ENCODE measurements at regions of chr1 and their contacts with region 1.

Region 1: DNA sequence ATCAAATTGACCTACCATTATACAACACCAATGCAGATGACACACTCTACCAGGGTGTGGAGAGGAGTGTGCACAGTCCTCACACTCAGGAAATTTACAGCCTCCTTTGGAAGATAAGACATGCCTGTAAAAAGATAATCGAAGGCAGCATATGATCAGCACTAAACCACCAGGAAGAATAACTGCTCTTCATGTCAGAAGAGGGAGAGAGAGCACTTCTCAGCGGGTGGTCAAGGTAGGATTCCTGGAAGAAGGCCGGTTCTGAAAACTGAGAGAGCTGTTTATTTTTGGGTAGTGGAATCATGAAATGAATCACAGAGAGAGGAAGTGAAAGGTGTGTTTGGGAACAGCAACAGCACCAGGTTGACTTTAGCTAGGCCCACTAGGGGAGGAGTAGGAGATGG is 14.0 kb upstream of the ZNF697 start:
- DNase-seq: no peak
- ATAC-seq: no peak
- H3K4me3 ChIP-seq: no peak overlapping the region
- H3K27ac ChIP-seq: no peak overlapping the region
- H3K4me1 ChIP-seq: peaks cover 2% of the 10 kb centered on the region; the same call in 1 of the 2 replicates
- H3K27me3 ChIP-seq: peaks cover 11% of the 10 kb centered on the region
- CTCF ChIP-seq: no peak
- POLR2A ChIP-seq: no peak
- RAD21 ChIP-seq: no peak

Region 2: GRCh38 chr1:119549719-119550132 is 112.3 kb before region 1 on chr1:
- CTCF ChIA-PET with region 1: no interaction called
- POLR2A ChIA-PET with region 1: no interaction called
- dilution Hi-C with region 1: no loop called
- in situ Hi-C with region 1: no loop called
- intact Hi-C with region 1: loop called (anchors 1 kb)
- DNase-seq: peak; percentile 67
- ATAC-seq: peak; percentile 85
- H3K4me3 ChIP-seq: no peak overlapping the region
- H3K27ac ChIP-seq: no peak overlapping the region
- H3K4me1 ChIP-seq: no peaks in the 10 kb centered on the region; the same call in 1 of the 2 replicates
- H3K27me3 ChIP-seq: peaks cover 4% of the 10 kb centered on the region; the same call in 1 of the 2 replicates
- CTCF ChIP-seq: peak; percentile 66
- POLR2A ChIP-seq: no peak
- RAD21 ChIP-seq: peak; percentile 66

Region 3: DNA sequence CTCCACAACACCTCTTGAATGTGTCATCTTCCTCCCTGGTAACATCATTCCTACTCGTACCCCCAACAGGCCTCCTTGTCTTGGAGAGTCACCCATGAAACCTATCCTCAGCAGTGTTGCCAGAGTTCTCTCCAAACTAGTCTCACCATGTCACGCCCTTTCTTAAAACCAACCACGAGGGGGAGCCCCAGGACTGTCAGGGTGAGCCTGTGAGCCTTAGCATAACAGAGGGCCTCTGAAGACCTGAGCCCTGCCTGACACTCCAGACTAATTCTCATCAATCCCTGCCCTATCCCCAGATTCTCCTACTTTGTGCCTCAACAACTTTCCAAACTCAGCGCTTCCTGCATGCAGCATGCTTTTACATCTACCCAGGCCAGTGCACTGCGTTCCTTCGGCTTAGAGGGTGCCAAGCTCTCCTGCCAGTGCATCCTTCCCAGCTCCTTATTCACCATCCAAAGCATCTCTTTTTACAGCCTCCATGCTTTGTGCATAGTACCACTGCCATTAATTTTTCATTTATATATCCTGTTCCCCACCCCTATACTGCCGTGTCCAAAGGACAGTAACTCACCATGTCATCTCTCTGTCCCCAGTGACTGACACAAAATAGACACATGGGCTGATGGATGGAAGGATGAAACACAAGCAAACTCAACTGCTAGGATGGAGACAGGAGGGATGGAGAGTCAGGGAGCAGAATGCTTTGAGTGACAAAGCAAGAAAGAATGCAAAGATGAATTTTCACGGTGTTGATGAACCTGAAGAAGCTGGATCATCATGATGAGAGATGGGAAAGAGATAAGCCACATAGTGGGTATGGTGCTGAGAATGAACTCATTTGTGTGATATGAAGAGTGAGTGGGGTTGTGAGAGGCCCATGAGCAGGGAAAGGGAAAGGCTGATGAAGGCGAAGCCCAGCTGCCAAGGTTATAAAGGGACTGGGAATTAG is 48.0 kb before region 1 on chr1:
- CTCF ChIA-PET with region 1: interaction called, 5 read pairs
- POLR2A ChIA-PET with region 1: no interaction called
- dilution Hi-C with region 1: no loop called
- in situ Hi-C with region 1: loop called (anchors 5 kb)
- intact Hi-C with region 1: loop called (anchors 1 kb)
- DNase-seq: peak; percentile 83
- ATAC-seq: peak; percentile 92
- H3K4me3 ChIP-seq: no peak overlapping the region
- H3K27ac ChIP-seq: no peak overlapping the region
- H3K4me1 ChIP-seq: peaks cover 2% of the 10 kb centered on the region; the same call in 1 of the 2 replicates
- H3K27me3 ChIP-seq: peaks cover 3% of the 10 kb centered on the region; the same call in 1 of the 2 replicates
- CTCF ChIP-seq: peak; percentile 88
- POLR2A ChIP-seq: no peak
- RAD21 ChIP-seq: peak; percentile 93

Measured in IMR-90 (cell line).